Calu3 (cell line): ENCODE measurements at regions of chr2 and their contacts with region 1.

Region 1: DNA sequence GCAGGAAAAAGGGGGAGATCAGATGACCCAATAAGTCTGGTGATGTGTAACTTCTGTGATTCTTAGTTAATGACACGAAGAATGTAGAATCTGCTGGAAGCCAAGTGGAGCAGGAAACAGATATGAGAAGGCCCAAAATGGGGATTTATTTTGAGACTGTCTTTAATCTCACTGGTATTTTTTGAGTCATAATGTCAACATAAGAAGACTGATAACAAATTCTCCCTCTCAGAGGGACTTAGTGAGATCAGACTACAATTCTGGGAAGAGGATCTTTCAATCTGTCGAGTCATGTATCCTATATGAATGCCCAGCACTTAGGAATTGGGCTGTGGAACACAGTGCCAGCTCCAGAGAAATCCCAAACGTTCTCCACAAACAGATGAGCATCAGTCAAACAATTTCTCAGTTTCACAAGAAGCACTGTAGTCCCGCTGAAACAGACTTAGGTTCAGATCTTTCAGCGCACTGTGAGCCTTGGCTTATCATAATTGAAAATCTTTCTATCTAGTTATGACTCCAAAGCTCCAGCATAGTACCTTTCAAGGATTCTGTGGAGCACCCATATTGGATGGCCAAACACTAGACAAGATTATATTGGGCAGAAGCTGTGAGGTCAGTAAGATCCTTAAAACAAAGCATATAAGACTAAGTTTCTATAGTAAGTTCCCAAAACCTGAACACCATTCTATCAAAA is 738.2 kb downstream of the LRP1B start:
- DNase-seq: no peak
- H3K4me3 Mint-ChIP-seq: peak overlapping the region; percentile 14
- H3K27ac Mint-ChIP-seq: peak overlapping the region; percentile 72
- H3K4me1 Mint-ChIP-seq: peaks cover 36% of the 10 kb centered on the region
- H3K27me3 Mint-ChIP-seq: no peaks in the 10 kb centered on the region
- CTCF ChIP-seq: no peak

Region 2: GRCh38 chr2:141475801-141476200 is 83.1 kb after region 1 on chr2:
- CTCF ChIA-PET with region 1: interaction called, 13 read pairs
- intact Hi-C with region 1: no loop called
- DNase-seq: no peak
- H3K4me3 Mint-ChIP-seq: no peak overlapping the region
- H3K27ac Mint-ChIP-seq: no peak overlapping the region
- H3K4me1 Mint-ChIP-seq: no peaks in the 10 kb centered on the region
- H3K27me3 Mint-ChIP-seq: no peaks in the 10 kb centered on the region
- CTCF ChIP-seq: no peak